Activated T-helper 1 cell treated with anti-CD3 and anti-CD28 coated beads, Interleukin-12 subunit alpha, Interleukin-12 subunit beta, Interleukin-2, Interleukin-4 antibody, amounts not matched to agents 30 ng/mL and 10 ng/mL and 1 ng/mL, durations not matched to agents 14 hours and 24 hours and 36 hours (primary cell): ENCODE measurements at regions of chr2 and their contacts with region 1.

Region 1: GRCh38 chr2:149587220-149587949 is at the start of gene MMADHC:
- DNase-seq: peak; percentile 91
- H3K4me3 Mint-ChIP-seq: peak within 1 kb of the TSS; percentile 97
- H3K27ac Mint-ChIP-seq: peak within 1 kb of the TSS; percentile 99
- H3K4me1 Mint-ChIP-seq: peaks cover 43% of the 10 kb centered on the region
- H3K27me3 Mint-ChIP-seq: peaks cover 10% of the 10 kb centered on the region
- total RNA-seq, gene MMADHC: 127 and 129 TPM in 2 replicates

Region 2: GRCh38 chr2:148874868-148875341 is 712.5 kb before region 1 on chr2 and contains the start of gene KIF5C:
- intact Hi-C with region 1: loop called (anchors 1 kb)
- DNase-seq: peak; percentile 77
- H3K4me3 Mint-ChIP-seq: peak within 1 kb of the TSS; percentile 91
- H3K27ac Mint-ChIP-seq: peak within 1 kb of the TSS; percentile 83
- H3K4me1 Mint-ChIP-seq: peaks cover 19% of the 10 kb centered on the region
- H3K27me3 Mint-ChIP-seq: peaks cover 18% of the 10 kb centered on the region
- total RNA-seq, gene KIF5C: 17.9 and 20.7 TPM in 2 replicates

Region 3: GRCh38 chr2:149808556-149808955 is 221.2 kb after region 1 on chr2:
- intact Hi-C with region 1: no loop called
- DNase-seq: no peak
- H3K4me3 Mint-ChIP-seq: no peak overlapping the region
- H3K27ac Mint-ChIP-seq: no peak overlapping the region
- H3K4me1 Mint-ChIP-seq: no peaks in the 10 kb centered on the region
- H3K27me3 Mint-ChIP-seq: no peaks in the 10 kb centered on the region

Region 4: GRCh38 chr2:151261231-151261976 is 1674.0 kb after region 1 on chr2 and contains the start of gene RBM43:
- intact Hi-C with region 1: loop called (anchors 2 kb)
- DNase-seq: peak; percentile 85
- H3K4me3 Mint-ChIP-seq: peak within 1 kb of the TSS; percentile 93
- H3K27ac Mint-ChIP-seq: peak within 1 kb of the TSS; percentile 98
- H3K4me1 Mint-ChIP-seq: peaks cover 18% of the 10 kb centered on the region
- H3K27me3 Mint-ChIP-seq: peaks cover 2% of the 10 kb centered on the region
- total RNA-seq, gene RBM43: 1.9 and 2.9 TPM in 2 replicates

Region 5: DNA sequence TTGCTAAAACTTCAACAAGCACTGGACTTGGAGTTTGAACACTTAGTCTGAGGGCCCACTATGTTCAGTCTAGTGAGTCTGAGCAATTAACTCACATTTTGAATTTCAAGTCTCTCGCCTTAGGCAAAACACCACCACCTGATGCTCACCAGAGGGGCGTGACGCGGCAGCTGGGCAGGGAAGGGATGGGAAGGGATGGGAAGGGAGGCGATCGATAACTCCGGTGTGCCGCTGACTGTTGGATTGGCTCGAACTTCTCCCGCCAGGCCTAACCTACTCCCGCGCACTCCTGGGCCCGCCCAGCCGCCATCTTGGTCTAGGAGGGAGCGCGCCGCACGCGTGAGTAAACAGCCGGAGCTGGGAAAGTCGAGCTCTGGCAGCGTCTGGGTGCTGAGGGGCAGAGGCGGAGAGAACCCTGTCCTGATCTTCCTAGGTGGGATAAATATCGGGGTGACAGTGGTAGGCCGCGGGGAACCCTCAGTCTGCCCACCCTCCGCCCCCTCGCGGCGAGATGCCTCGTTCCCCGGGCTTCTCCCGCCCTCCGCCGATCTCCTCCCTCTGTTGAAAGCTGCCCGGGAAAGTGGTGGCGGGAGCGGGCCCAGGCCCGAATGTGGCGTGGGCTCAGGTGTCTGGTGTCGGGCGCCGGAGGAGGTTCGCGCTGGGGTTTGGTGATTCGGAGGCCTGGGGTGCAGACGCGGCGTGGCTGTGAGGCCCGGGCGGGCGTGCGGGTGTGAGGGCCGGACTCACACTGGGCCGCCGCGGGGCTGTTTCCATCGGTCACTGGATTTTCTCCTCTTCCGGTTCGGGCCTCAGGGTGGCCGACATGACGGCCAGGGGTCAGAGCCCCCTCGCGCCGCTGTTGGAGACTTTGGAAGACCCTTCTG is 1822.5 kb after region 1 on chr2 and contains the start of gene RIF1:
- intact Hi-C with region 1: loop called (anchors 5 kb)
- DNase-seq: peak; percentile 68
- H3K4me3 Mint-ChIP-seq: peak within 1 kb of the TSS; percentile 95
- H3K27ac Mint-ChIP-seq: peak within 1 kb of the TSS; percentile 92
- H3K4me1 Mint-ChIP-seq: peaks cover 20% of the 10 kb centered on the region
- H3K27me3 Mint-ChIP-seq: peaks cover 3% of the 10 kb centered on the region
- total RNA-seq, gene RIF1: 82.4 and 82.7 TPM in 2 replicates